Prostate gland (tissue), 2 donors: ENCODE measurements at regions of chr3 and their contacts with region 1.

Region 1: DNA sequence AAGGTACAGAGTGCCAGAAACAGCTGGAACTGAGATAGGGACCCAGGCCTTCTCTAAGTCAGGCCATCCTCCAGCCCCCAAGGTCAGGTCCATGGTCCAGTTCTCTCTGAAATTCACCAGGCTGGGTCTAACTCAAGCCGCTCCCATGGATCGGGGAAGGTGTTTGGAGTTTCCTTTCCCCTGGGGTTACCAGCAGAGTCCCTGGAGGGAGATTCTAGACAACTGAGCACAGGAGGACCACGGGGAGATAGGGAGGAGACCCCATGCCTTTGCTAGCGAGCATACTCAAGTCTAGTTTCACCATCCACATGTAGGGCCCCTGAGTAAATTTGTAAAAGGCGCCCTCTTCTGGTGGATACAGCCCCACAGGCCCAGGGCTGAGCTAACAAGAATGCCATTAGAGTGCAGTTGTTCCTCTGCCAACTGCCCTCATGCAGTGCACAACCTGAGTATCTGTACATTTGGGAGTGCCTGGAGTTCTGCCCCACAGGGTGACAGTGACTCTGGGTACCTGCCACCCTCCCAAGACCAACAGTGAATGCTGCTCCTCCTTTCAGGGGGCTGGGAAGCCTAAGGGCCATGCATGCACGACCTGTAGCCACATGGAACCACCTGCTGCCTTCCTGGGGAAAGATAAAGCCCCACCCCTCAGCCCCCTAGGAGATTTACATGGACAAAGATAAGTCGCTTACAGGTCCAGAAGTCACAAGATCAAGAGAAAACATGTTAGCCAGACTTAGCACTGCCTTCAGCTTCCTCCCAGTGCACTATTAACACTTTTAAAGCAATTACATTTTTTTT is 89.0 kb downstream of the IQSEC1 start:
- DNase-seq: peak; percentile 73
- H3K4me3 ChIP-seq: no peak overlapping the region
- H3K27ac ChIP-seq: no peak overlapping the region
- H3K4me1 ChIP-seq: no peaks in the 10 kb centered on the region
- H3K27me3 ChIP-seq: no peaks in the 10 kb centered on the region
- CTCF ChIP-seq: peak; percentile 43 to 84 (median 72)
- POLR2A ChIP-seq: no peak

Region 2: GRCh38 chr3:12891985-12892839 is 92.0 kb before region 1 on chr3:
- intact Hi-C with region 1: loop called (anchors 5 kb)
- DNase-seq: peak; percentile 42
- H3K4me3 ChIP-seq: peak overlapping the region in 1 of 2 donors; percentile 12
- H3K27ac ChIP-seq: no peak overlapping the region
- H3K4me1 ChIP-seq: no peaks in the 10 kb centered on the region
- H3K27me3 ChIP-seq: no peaks in the 10 kb centered on the region
- CTCF ChIP-seq: peak; percentile 68 to 88 (median 77)
- POLR2A ChIP-seq: no peak

Region 3: GRCh38 chr3:13711906-13712650 is 727.9 kb after region 1 on chr3:
- intact Hi-C with region 1: no loop called
- DNase-seq: peak; percentile 0
- H3K4me3 ChIP-seq: no peak overlapping the region
- H3K27ac ChIP-seq: no peak overlapping the region
- H3K4me1 ChIP-seq: no peaks in the 10 kb centered on the region
- H3K27me3 ChIP-seq: no peaks in the 10 kb centered on the region
- CTCF ChIP-seq: no peak
- POLR2A ChIP-seq: no peak